Activated naive CD4-positive, alpha-beta T cell treated with anti-CD3 and anti-CD28 coated beads for 36 hours (primary cell): ENCODE measurements at regions of chr12 and their contacts with region 1.

Region 1: GRCh38 chr12:49358483-49359141 is 8.7 kb upstream of the SPATS2 start:
- DNase-seq: peak; percentile 75
- H3K4me3 Mint-ChIP-seq: no peak overlapping the region
- H3K27ac Mint-ChIP-seq: no peak overlapping the region
- H3K4me1 Mint-ChIP-seq: peaks cover 2% of the 10 kb centered on the region
- H3K27me3 Mint-ChIP-seq: peaks cover 14% of the 10 kb centered on the region

Region 2: GRCh38 chr12:48995061-48995879 is 363.3 kb before region 1 on chr12:
- CTCF ChIA-PET with region 1: no interaction called
- intact Hi-C with region 1: no loop called
- DNase-seq: peak; percentile 69
- H3K4me3 Mint-ChIP-seq: peak overlapping the region; percentile 10
- H3K27ac Mint-ChIP-seq: no peak overlapping the region
- H3K4me1 Mint-ChIP-seq: peaks cover 33% of the 10 kb centered on the region
- H3K27me3 Mint-ChIP-seq: peaks cover 54% of the 10 kb centered on the region

Region 3: GRCh38 chr12:49336645-49337584 is 21.7 kb before region 1 on chr12 and contains the start of gene C1QL4:
- CTCF ChIA-PET with region 1: interaction called, 13 read pairs
- intact Hi-C with region 1: no loop called
- DNase-seq: peak; percentile 90
- H3K4me3 Mint-ChIP-seq: peak within 1 kb of the TSS; percentile 57
- H3K27ac Mint-ChIP-seq: no peak within 1 kb of the TSS
- H3K4me1 Mint-ChIP-seq: peaks cover 25% of the 10 kb centered on the region
- H3K27me3 Mint-ChIP-seq: peaks cover 78% of the 10 kb centered on the region
- total RNA-seq, gene C1QL4: not detected

Region 4: GRCh38 chr12:49347384-49348237 is 11.0 kb before region 1 on chr12:
- CTCF ChIA-PET with region 1: interaction called, 34 read pairs
- intact Hi-C with region 1: no loop called
- DNase-seq: peak; percentile 77
- H3K4me3 Mint-ChIP-seq: peak overlapping the region; percentile 58
- H3K27ac Mint-ChIP-seq: no peak overlapping the region
- H3K4me1 Mint-ChIP-seq: peaks cover 41% of the 10 kb centered on the region
- H3K27me3 Mint-ChIP-seq: peaks cover 58% of the 10 kb centered on the region

Region 5: DNA sequence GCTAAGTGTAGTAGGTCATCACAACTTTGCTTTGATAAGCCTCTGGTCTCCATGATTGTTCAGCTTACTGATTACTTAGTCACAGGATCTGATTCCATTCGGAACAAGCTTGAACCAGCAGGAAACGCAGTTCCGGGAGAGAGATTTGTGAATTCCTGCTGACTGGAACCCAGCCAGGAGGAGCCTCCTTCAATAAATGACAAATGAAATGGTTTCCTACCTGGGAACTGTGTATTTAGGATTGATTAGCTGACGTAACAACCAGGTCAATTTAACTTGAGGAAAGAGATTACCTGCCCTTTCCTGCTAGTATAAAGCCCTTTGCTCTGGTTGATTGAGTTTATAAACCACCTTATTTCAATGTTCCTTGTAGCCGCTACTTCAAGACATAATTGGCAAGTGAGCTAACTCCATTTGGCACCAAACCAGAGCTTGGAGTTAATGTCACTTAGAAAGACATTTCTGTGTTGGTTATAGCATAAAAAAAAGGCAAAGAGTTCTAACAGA is 145.1 kb after region 1 on chr12:
- CTCF ChIA-PET with region 1: interaction called, 46 read pairs
- intact Hi-C with region 1: no loop called
- DNase-seq: no peak
- H3K4me3 Mint-ChIP-seq: no peak overlapping the region
- H3K27ac Mint-ChIP-seq: no peak overlapping the region
- H3K4me1 Mint-ChIP-seq: peaks cover 18% of the 10 kb centered on the region
- H3K27me3 Mint-ChIP-seq: no peaks in the 10 kb centered on the region

Region 6: GRCh38 chr12:49524660-49525324 is 166.2 kb after region 1 on chr12:
- CTCF ChIA-PET with region 1: interaction called, 15 read pairs
- intact Hi-C with region 1: no loop called
- DNase-seq: no peak
- H3K4me3 Mint-ChIP-seq: no peak overlapping the region
- H3K27ac Mint-ChIP-seq: no peak overlapping the region
- H3K4me1 Mint-ChIP-seq: no peaks in the 10 kb centered on the region
- H3K27me3 Mint-ChIP-seq: no peaks in the 10 kb centered on the region

Region 7: DNA sequence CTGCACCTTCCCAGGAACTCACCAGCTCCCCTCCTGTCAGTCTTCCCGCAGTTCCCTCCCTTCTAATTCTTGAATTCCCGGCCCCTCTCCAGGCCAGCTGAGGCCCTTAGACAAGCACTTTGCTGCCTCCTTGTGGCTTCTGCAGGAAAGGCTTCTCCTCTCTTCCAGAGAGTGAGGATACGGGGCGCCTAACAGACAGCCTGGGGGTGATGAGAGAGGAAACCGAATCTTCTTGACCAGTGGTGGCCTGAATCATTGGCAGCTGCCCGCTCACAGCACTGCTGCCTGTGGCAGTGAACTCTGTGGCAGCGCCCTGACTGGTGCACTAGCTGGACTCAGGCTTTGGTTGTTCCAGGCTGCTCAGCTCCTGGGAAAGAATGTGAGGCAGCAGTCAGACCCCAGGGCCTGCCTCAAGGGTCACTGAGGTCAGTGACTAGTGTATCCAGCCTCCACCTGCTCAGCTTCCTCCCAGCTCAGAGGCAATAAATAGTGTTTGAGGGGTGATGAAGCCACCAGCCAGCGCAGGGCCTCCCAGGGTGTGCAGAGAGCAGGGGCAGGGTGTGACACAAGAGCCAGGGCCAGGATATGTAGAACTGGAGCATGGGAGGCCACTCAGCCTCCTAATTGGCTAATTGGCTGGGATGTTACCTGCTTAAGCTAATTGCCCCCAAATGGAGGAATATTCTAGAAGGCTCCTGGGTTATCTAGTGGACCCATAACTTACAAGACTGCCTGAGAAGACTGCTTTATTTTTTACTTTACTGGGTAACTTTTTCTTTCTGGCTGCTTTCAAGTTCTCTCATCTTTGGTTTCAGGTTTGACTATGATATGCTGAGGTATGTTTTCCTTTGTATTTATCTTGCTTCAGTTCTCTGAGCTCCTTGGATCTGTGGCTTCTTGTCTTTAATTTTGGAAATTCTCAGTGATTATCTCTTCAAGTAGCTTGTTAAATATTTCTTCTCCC is 222.2 kb after region 1 on chr12:
- CTCF ChIA-PET with region 1: interaction called, 49 read pairs
- intact Hi-C with region 1: loop called (anchors 1 kb)
- DNase-seq: peak; percentile 69
- H3K4me3 Mint-ChIP-seq: no peak overlapping the region
- H3K27ac Mint-ChIP-seq: no peak overlapping the region
- H3K4me1 Mint-ChIP-seq: peaks cover 16% of the 10 kb centered on the region
- H3K27me3 Mint-ChIP-seq: no peaks in the 10 kb centered on the region